Activated CD4-positive, alpha-beta T cell treated with anti-CD3 and anti-CD28 coated beads for 36 hours (primary cell): ENCODE measurements at regions of chr19 and their contacts with region 1.

Region 1: GRCh38 chr19:40822161-40822560 is 23.2 kb downstream of the EGLN2 start:
- DNase-seq: no peak
- ATAC-seq: no peak
- H3K4me3 Mint-ChIP-seq: no peak overlapping the region
- H3K27ac Mint-ChIP-seq: no peak overlapping the region
- H3K4me1 Mint-ChIP-seq: peaks cover 40% of the 10 kb centered on the region
- H3K27me3 Mint-ChIP-seq: no peaks in the 10 kb centered on the region

Region 2: DNA sequence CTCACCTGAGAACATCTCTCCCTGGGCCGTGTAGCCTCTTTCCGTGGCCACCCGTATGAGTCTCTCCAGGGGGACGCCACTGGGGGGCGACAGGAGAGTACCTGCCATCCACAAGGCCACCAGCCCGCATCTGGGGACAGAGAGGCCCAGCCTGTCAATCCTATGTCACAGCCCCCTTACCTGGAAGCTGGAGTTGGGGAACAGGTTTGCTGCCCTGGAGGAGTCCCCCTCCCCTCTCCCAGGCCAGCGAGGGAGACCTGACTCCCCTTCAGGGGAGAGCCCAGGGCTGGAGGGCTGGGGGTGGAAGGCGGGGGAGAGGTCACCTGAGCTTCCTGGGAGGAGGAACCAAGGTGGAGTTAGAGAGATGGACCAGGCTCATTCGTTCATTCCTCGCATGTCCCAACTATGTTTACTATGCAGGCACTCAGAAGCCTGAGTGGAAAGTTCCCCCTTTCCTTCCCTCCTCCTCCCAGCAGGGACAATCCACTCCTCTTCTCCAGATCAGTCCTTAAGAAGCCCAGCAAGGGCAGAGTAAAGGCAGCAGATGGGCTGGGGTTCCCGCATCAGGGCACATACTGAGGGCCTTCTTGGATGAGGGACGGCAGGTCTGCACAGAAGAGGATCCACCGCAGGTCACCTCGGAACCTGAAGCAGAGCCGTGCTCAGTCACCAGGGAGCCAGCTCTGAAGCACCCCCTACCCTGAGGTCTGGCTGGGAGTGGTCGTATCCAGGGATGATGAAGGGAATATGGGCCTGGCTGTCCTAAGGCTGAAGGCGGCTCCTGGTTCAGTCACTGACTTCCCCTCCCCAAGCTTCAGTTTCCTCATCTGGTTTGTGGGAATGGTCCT is 77.4 kb before region 1 on chr19:
- CTCF ChIA-PET with region 1: interaction called, 8 read pairs
- POLR2A ChIA-PET with region 1: no interaction called
- intact Hi-C with region 1: loop called in 1 of 2 experiments (anchors 1 kb)
- DNase-seq: peak; percentile 63
- ATAC-seq: peak; percentile 71
- H3K4me3 Mint-ChIP-seq: no peak overlapping the region
- H3K27ac Mint-ChIP-seq: no peak overlapping the region
- H3K4me1 Mint-ChIP-seq: peaks cover 10% of the 10 kb centered on the region
- H3K27me3 Mint-ChIP-seq: no peaks in the 10 kb centered on the region

Region 3: DNA sequence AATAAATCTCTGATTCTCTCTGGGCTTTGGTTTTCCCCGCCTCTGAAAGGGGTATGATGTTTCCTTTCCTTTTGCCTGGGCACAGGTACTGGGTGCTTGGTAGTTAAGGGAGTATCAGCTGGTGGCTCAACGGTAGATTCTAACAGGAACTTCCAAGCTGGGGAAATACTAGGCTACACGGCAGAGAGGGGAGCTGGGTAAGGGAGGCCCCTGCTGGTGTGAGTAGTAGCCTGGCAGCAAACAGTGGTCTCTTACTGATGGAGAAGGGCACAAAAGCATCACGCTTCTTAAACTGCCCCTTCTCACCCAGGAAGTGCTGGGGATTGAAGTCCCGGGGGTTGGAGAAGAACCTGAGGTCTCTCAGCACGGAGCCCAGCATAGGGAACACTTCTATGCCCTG is 86.8 kb after region 1 on chr19:
- CTCF ChIA-PET with region 1: no interaction called
- POLR2A ChIA-PET with region 1: no interaction called
- intact Hi-C with region 1: loop called in 1 of 2 experiments (anchors 1 kb)
- DNase-seq: peak; percentile 69
- ATAC-seq: peak; percentile 72
- H3K4me3 Mint-ChIP-seq: peak overlapping the region; percentile 62
- H3K27ac Mint-ChIP-seq: no peak overlapping the region
- H3K4me1 Mint-ChIP-seq: peaks cover 13% of the 10 kb centered on the region
- H3K27me3 Mint-ChIP-seq: peaks cover 19% of the 10 kb centered on the region

Region 4: DNA sequence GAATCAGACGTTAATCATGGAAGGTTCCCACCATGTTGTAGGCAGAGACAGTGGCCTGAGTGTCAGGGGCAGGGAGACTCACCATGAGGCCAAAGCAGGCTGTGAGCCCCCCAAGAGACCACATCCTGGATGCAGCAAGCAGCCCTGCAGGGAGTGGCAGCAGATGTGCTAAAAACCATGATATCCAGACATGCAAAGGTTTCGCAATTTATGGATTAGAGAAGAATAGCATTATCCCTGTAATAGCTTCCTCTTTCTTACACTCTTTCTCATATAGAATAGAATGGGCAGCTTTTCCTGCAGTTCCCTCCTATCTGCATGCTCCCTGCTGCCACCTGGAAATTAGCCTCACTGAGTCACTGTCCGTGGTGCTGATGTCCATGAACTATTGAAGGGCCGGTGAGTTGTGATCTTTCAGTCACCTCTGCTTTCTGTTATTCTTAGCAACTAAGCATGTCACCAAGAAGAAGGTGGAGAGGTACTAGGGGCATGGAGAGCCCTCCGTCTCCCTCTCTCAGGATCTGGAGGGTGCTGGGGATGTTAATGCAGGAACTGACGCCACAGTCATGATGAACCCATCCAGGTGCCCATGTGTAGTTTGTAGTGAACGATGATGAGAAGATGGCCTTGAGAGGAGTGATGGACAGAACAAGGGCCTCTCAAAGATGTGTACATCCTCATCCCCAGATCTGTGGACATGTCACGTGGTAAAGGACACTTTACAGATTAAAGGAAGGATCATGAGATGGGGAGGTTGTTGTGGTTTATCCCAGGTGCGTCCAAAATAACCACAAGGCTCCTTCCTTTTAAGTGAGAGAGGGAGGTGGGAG is 794.8 kb after region 1 on chr19:
- CTCF ChIA-PET with region 1: no interaction called
- POLR2A ChIA-PET with region 1: no interaction called
- intact Hi-C with region 1: no loop called
- DNase-seq: peak; percentile 22
- ATAC-seq: no peak
- H3K4me3 Mint-ChIP-seq: no peak overlapping the region
- H3K27ac Mint-ChIP-seq: no peak overlapping the region
- H3K4me1 Mint-ChIP-seq: no peaks in the 10 kb centered on the region
- H3K27me3 Mint-ChIP-seq: peaks cover 4% of the 10 kb centered on the region